Thyroid gland (tissue), 4 donors: ENCODE measurements at regions of chr12 and their contacts with region 1.

Region 1: GRCh38 chr12:122730215-122731014 is at the start of gene HCAR1:
- DNase-seq: peak; percentile 61 to 68
- H3K4me3 ChIP-seq: peak within 1 kb of the TSS in 1 of 3 donors; percentile 12
- H3K27ac ChIP-seq: peak within 1 kb of the TSS; percentile 46 to 81 (median 64)
- H3K4me1 ChIP-seq: peaks cover 6 to 58% of the 10 kb centered on the region in 2 donors
- H3K27me3 ChIP-seq: no peaks in the 10 kb centered on the region
- CTCF ChIP-seq: peak in 4 of 6 experiments; percentile 23 to 47 (median 33)
- POLR2A ChIP-seq: peak in 1 of 2 donors; percentile 20
- total RNA-seq, gene HCAR1: 0.92 to 4.0 (median 2.0) TPM

Region 2: GRCh38 chr12:122646517-122647217 is 83.7 kb before region 1 on chr12:
- intact Hi-C with region 1: loop called (anchors 10 kb)
- DNase-seq: no peak
- H3K4me3 ChIP-seq: no peak overlapping the region
- H3K27ac ChIP-seq: no peak overlapping the region
- H3K4me1 ChIP-seq: peaks cover 3 to 4% of the 10 kb centered on the region in 2 donors
- H3K27me3 ChIP-seq: no peaks in the 10 kb centered on the region
- CTCF ChIP-seq: no peak
- POLR2A ChIP-seq: no peak

Region 3: GRCh38 chr12:122860346-122861090 is 130.1 kb after region 1 on chr12:
- intact Hi-C with region 1: no loop called
- DNase-seq: peak; percentile 82 to 89
- H3K4me3 ChIP-seq: no peak overlapping the region
- H3K27ac ChIP-seq: peak overlapping the region in 2 of 3 donors; percentile 91 to 95
- H3K4me1 ChIP-seq: peaks cover 27 to 39% of the 10 kb centered on the region in 2 donors
- H3K27me3 ChIP-seq: no peaks in the 10 kb centered on the region
- CTCF ChIP-seq: peak; percentile 77 to 95 (median 92)
- POLR2A ChIP-seq: no peak